ENCODE measurements at regions of chr10 and their contacts with region 1.

Region 1: DNA sequence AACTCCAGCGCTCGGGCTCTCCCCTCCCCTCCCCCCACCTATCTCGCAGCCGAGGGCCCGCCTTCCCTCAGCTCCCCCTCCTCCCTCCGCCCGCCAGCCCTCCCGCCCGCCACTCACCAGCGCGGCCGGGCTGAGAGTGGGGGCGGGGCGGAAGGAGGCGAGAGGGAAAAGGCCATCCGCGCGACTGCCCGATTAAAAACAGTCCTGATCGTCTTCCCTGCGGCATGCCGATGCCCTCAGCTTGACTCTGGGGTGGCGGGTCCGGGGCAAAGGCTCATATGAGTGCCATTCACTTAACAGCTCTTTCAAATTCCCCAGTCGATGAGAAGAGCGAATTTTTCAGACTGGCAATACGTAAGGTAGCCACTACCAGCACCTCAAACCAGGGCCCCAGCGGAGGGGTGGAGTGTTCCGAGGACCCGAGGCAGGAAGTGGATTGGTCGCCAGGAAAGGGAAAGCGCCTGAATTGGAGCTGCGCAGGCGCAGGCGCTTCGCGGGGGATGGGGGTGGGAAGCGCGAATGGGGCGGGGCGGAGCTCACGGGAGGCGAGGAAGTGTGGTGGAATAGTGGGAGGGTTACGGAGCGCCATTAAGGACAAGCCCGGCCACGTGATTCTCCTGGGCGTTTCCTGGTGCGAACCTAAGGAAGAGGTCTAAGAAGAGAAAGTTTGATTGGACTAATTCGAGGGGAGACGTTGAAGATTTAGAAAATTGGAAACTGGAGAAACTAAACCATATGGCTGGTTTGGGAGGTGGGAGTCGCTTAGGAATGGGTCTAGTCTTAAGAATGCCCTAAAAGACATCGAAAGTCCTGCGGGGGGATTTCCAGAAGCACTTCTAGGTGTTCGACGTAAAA is at the start of gene UPF2:
- DNase-seq: peak; percentile 99
- H3K4me3 ChIP-seq: peak within 1 kb of the TSS; percentile 91 to 100 (median 99)
- H3K27ac ChIP-seq: peak within 1 kb of the TSS; percentile 95 to 98 (median 96)
- H3K4me1 ChIP-seq: peaks cover 0 to 18% (median 17%) of the 10 kb centered on the region in 4 donors
- H3K27me3 ChIP-seq: no peaks in the 10 kb centered on the region
- CTCF ChIP-seq: no peak
- EP300 ChIP-seq: peak in 2 of 4 donors; percentile 26 to 30
- POLR2A ChIP-seq: no peak
- total RNA-seq, gene UPF2: 29.3 to 36.9 (median 29.8) TPM

Region 2: DNA sequence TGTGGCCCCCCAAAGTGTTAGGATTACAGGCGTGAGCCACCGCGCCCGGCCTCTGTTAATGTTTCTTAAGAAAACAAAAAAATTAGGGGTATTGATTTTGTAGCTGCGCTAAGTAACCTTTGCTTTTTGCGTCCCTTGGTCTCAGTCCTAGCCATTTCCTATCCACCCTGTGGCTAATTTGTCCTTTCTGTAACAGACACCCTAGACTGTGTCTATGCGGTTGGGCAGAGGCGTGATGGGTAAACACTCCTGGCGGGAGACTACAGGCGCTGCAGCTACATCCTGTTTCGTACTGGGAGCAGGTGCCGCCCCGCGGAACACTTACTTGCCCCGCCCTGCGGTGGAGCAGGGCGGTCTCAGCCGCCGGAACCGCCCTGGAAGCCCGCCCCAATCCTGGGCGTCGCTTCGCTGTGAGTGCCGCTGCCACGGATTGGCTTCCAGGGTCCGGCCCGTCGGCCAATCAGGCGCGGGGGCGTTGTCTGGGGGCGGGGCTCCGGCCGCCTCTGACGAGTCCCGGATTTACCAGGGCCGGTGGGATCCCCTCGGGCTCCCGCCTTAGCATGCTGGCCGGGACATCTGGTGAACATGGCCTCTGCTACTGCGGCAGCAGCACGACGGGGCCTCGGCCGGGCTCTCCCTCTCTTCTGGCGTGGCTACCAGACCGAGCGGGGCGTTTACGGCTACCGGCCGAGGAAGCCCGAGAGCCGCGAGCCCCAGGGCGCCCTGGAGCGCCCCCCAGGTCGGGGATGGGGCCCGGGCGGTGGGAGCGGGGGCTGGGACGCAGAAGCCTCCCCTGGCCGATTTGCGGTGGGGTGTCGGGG is 25.6 kb after region 1 on chr10 and contains the start of gene DHTKD1:
- intact Hi-C with region 1: loop called (anchors 1 kb)
- DNase-seq: peak; percentile 99
- H3K4me3 ChIP-seq: peak within 1 kb of the TSS; percentile 78 to 96 (median 94)
- H3K27ac ChIP-seq: peak within 1 kb of the TSS; percentile 80 to 87 (median 84)
- H3K4me1 ChIP-seq: peaks cover 0 to 17% (median 9%) of the 10 kb centered on the region in 4 donors
- H3K27me3 ChIP-seq: no peaks in the 10 kb centered on the region
- CTCF ChIP-seq: peak in 3 of 4 experiments; percentile 51 to 72 (median 72)
- EP300 ChIP-seq: peak in 2 of 4 donors; percentile 7 to 45
- POLR2A ChIP-seq: peak; percentile 52 to 60
- total RNA-seq, gene DHTKD1: 14.7 to 37.3 (median 20.7) TPM

Region 3: DNA sequence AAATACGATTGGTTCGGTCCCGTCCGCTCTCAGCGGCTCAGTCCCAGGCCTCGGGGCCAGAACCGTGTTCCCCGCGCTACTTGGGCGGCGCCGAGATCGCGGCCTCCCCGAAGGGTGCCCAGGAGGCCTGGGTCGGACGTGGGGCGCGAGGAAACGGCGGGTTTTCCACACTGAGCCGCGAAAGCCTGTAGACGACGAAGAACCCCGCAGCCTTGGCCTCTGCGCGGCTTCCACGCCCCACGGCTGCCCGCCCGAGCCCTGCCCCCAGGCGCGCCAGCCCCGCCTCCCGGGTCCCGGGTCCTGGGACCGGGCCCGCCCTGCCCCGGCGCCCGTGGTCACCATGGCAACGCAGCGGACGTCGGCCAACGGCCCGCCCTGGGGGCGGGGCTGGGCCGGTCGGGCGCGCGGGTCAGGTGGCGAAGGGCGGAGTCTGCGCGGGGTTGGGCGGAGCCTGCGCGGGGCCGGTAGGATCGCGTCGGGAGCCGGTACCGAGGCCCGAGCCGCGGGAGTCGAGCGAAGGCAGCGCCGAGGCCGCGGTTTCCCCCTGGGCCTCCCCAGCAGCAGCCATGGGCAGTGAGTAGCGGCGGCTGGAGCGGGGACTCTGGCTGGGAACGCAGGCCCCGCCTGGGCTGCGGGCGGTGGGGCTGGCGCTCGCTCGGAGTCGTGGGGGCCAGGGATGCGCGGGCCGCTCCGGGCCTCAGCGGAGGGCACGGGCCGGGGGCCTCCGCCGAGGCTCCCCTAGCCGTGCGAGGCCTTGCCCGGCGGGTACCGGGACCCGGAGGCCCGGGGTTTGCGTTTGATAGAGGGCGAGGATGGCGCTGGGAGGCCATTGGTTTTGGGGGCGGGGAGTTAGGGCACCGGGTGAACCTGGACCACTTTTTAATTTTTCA is 86.4 kb after region 1 on chr10 and contains the start of gene SEC61A2:
- intact Hi-C with region 1: loop called (anchors 1 kb)
- DNase-seq: peak; percentile 97
- H3K4me3 ChIP-seq: peak within 1 kb of the TSS; percentile 61 to 100 (median 94)
- H3K27ac ChIP-seq: peak within 1 kb of the TSS; percentile 93 to 96 (median 96)
- H3K4me1 ChIP-seq: peaks cover 0 to 15% (median 10%) of the 10 kb centered on the region in 4 donors
- H3K27me3 ChIP-seq: no peaks in the 10 kb centered on the region
- CTCF ChIP-seq: no peak
- EP300 ChIP-seq: no peak
- POLR2A ChIP-seq: peak; percentile 22 to 32
- total RNA-seq, gene SEC61A2: 7.5 to 11.1 (median 9.1) TPM

Region 4: GRCh38 chr10:13099666-13100348 is 1056.8 kb after region 1 on chr10 and contains the start of gene OPTN:
- intact Hi-C with region 1: loop called (anchors 5 kb)
- DNase-seq: peak; percentile 89
- H3K4me3 ChIP-seq: peak within 1 kb of the TSS; percentile 73 to 94 (median 94)
- H3K27ac ChIP-seq: peak within 1 kb of the TSS; percentile 93 to 97 (median 95)
- H3K4me1 ChIP-seq: peaks cover 0 to 29% (median 22%) of the 10 kb centered on the region in 4 donors
- H3K27me3 ChIP-seq: no peaks in the 10 kb centered on the region
- CTCF ChIP-seq: peak; percentile 57 to 68 (median 58)
- EP300 ChIP-seq: peak in 1 of 4 donors; percentile 5
- POLR2A ChIP-seq: peak in 1 of 2 donors; percentile 44
- total RNA-seq, gene OPTN: 53.5 to 72.6 (median 59.7) TPM

Region 5: DNA sequence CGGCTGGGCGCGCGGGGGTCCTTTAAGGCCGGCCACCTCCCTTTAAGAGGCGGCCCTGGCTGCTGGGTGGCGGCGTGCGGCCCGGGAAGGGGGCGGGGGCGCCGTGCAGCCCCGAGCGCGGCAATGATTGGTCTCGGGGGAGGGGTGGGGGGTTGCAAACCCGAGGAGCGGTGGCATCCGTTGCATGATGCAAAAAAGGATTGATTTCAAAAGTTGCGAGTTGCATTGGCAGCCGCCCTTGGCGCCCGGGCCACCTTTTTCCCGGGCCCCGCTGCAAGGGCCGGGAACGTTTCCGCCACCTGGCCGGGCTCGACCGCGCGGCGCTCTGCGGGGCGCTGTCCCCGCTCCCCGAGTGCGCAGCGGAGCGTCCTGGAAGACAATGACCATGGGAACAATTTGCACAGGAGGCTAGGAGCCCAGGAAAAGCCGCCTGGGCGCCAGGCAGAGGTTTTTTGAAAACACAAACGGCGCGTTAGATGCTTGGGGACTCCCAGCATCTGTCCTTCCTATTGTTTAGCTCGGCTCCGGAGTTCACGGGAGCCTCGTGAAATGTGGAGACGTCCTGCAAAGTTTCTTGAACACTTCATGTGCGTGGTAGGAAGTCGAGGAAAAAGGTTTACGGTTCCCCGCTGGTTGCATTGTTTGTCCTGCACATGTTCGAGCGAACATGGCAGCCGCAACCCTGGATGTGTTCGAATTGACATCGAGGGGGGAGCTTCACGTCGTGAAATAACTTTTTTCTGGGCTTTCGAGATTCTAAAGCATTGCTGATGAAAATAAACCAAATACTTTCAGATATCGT is 1305.4 kb after region 1 on chr10 and contains the start of gene SEPHS1:
- intact Hi-C with region 1: loop called (anchors 5 kb)
- DNase-seq: peak; percentile 84
- H3K4me3 ChIP-seq: peak within 1 kb of the TSS; percentile 69 to 91 (median 87)
- H3K27ac ChIP-seq: peak within 1 kb of the TSS; percentile 95 to 97 (median 96)
- H3K4me1 ChIP-seq: peaks cover 0 to 32% (median 28%) of the 10 kb centered on the region in 4 donors
- H3K27me3 ChIP-seq: peaks cover 0 to 18% (median under 1%) of the 10 kb centered on the region in 3 donors
- CTCF ChIP-seq: peak in 1 of 4 experiments; percentile 3
- EP300 ChIP-seq: no peak
- POLR2A ChIP-seq: no peak
- total RNA-seq, gene SEPHS1: 31.4 to 41.0 (median 37.6) TPM